ENCODE measurements at regions of chr17 and their contacts with region 1.

Region 1: DNA sequence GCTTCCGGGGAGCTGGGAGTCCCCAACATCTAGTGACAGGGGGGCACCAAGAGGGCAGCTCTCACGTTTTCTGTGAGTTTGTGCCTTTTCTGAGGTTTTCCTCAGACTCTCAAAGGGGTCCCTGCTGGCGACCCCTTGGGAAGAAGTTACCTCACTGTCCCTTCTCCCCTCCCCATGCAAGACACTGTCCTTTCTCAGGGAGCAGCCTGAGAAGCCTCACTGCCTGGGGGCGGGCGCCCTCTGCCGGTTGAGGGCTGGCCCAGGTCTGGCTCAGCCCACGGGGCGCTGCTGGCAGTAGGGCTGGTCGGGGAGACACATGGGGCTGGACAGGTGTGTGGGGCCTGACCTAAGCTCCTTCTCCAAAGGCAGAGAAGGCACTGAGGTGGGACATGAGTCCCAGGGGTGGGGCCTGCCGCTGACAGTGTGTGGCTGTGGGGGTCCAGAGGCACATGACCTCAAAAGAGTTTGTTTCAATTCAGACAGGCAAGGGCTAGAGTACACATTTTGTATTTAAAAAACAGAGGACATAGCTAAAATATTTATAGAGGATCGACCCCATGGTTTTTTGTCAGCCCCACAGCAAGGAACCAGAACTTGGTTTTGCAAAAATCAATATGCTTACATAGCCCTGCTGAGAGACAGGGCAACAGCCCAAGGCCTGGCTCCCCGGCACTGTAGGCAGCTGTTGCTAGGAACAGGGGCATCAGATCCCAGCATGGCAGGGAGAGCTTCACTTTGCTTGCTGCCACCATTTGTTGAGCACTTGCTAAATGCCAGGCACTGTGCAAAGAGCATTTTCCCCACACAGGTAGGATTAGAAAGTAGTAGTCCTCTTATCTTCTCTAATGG is 18.5 kb upstream of the ALDH3A1 start:
- DNase-seq: no peak
- ATAC-seq: peak; percentile 98; the same call in 1 of the 2 replicates
- H3K4me3 ChIP-seq: no peak overlapping the region
- H3K27ac ChIP-seq: no peak overlapping the region
- H3K4me1 ChIP-seq: peaks cover 10% of the 10 kb centered on the region; the same call in 1 of the 2 replicates
- H3K27me3 ChIP-seq: no peaks in the 10 kb centered on the region
- CTCF ChIP-seq: peak; percentile 98

Region 2: DNA sequence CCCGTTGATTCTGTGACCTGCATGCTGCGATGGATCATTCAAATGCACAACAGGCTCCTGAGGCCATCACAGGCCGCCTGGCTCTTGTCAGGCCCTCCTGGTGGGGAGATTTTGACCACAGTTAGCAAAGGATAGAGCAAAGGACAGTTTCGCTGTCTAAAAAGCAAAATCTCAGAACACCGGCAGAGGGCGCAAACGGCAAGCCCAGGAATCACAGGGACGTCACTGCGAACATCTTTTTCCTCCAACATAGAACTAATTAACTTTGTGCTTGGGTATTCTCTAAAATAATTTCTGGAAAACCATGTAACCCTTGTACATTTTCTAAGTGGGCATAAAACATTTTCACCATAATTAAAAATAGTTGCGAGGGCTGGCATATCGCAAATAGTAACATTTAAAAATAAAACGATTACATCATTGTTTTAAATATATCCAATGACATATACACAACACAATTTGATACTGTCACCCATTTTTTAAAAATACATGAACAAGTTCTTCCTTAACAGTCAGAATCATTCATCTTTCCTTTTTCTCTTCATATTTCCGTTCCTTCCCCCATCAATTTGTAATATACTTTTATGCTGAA is 252.7 kb before region 1 on chr17:
- CTCF ChIA-PET with region 1: interaction called, 14 read pairs
- POLR2A ChIA-PET with region 1: no interaction called
- in situ Hi-C with region 1: no loop called
- intact Hi-C with region 1: loop called (anchors 1 kb)
- DNase-seq: peak; percentile 51
- ATAC-seq: peak; percentile 86
- H3K4me3 ChIP-seq: no peak overlapping the region
- H3K27ac ChIP-seq: no peak overlapping the region
- H3K4me1 ChIP-seq: no peaks in the 10 kb centered on the region
- H3K27me3 ChIP-seq: no peaks in the 10 kb centered on the region
- CTCF ChIP-seq: peak; percentile 92

Region 3: DNA sequence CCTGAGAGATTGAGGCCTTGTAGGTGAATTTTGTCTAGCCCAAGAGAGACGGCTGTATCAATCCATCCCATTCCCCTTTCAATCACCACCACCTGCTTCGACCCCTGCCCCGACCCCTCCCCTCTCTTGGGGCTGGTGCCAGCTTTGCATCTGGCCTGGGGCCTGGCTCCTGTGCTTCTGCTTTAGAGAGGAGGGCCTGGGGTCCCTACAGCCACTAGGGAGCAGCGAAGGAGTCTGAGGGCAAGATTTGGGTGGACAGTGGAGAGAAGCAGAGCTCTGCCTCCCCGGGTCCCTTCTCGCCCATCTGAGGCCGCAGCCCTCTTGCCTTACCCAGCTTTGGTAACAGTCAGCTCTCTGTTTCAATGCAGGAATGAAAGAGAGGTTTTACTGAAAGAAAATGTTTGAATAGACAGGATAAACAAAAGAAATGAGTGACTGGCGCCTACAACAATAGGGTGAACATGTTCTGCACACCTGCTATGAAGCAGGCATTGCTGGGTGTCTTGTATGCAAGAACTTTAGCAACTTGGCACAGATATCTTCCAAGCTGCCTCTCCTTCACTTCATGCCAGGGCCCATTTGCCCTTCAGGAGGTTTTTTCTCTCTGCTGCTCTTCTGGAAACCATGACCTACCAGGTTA is 175.6 kb before region 1 on chr17:
- CTCF ChIA-PET with region 1: interaction called, 16 read pairs
- POLR2A ChIA-PET with region 1: no interaction called
- in situ Hi-C with region 1: no loop called
- intact Hi-C with region 1: no loop called
- DNase-seq: no peak
- ATAC-seq: no peak
- H3K4me3 ChIP-seq: no peak overlapping the region
- H3K27ac ChIP-seq: no peak overlapping the region
- H3K4me1 ChIP-seq: no peaks in the 10 kb centered on the region
- H3K27me3 ChIP-seq: no peaks in the 10 kb centered on the region
- CTCF ChIP-seq: no peak